AG04449 (cell line): ENCODE measurements at regions of chr19 and their contacts with region 1.

Region 1: GRCh38 chr19:17576759-17577473 is 21.5 kb downstream of the COLGALT1 start:
- DNase-seq: no peak
- H3K4me3 ChIP-seq: no peak overlapping the region
- CTCF ChIP-seq: no peak

Region 2: DNA sequence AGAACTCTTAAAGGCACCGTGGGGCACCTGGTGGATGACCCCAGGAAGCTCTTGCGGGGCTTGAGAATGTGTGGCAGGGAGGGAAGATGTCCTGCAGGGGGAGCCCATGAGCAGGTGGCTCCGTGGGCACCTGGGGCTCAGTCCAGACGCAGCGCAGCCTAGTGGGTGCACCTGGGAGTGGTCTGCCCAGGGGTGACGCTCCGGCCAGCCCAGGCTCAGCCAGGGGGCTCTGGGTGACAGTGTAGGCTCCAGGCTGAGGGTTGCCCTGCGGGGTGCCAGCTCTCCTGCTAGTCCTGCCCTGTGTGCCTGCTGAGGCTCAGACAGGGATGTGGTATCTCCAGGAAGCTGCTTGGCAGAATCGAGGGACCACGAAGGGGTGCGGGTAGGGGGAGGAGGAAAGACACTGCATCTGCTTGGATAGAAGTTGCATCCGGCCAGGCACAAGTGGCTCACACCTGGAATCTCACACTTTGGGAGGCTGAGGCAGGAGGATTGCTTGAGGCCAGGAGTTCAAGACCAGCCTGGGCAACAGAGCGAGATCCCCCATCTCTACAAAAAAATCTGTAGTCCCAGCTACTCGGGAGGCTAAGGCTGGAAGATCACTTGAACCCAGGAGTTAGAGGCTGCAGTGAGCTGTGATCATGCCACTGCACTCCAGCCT is 80.4 kb before region 1 on chr19:
- CTCF ChIA-PET with region 1: interaction called, 17 read pairs
- POLR2A ChIA-PET with region 1: no interaction called
- DNase-seq: no peak
- H3K4me3 ChIP-seq: no peak overlapping the region
- CTCF ChIP-seq: peak; percentile 91

Region 3: DNA sequence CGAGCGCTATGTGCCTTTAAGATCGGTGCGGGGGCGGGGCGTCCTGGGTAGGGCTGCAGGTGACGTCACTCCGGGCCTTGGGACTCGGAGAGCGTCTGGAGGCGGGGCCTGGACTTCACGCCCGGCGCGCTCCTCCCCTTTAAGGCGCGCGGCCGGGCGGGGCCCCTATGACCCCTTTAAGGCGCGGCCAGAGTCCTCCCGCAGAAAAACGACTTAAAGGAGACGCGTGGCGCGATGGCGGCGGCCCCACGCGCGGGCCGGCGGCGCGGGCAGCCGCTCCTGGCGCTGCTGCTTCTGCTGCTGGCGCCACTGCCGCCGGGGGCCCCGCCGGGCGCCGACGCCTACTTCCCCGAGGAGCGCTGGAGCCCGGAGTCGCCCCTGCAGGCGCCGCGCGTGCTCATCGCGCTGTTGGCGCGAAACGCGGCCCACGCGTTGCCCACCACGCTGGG is 21.4 kb before region 1 on chr19 and contains the start of gene COLGALT1:
- CTCF ChIA-PET with region 1: interaction called, 30 read pairs
- POLR2A ChIA-PET with region 1: no interaction called
- DNase-seq: peak; percentile 44
- H3K4me3 ChIP-seq: peak within 1 kb of the TSS; percentile 87
- CTCF ChIP-seq: no peak

Region 4: GRCh38 chr19:17562561-17562960 is 14.4 kb before region 1 on chr19:
- CTCF ChIA-PET with region 1: interaction called, 37 read pairs
- POLR2A ChIA-PET with region 1: no interaction called
- DNase-seq: no peak
- H3K4me3 ChIP-seq: no peak overlapping the region
- CTCF ChIP-seq: no peak

Region 5: GRCh38 chr19:17605761-17606745 is 29.1 kb after region 1 on chr19:
- CTCF ChIA-PET with region 1: interaction called, 12 read pairs
- POLR2A ChIA-PET with region 1: no interaction called
- DNase-seq: no peak
- H3K4me3 ChIP-seq: peak overlapping the region; percentile 52
- CTCF ChIP-seq: peak; percentile 55

Region 6: DNA sequence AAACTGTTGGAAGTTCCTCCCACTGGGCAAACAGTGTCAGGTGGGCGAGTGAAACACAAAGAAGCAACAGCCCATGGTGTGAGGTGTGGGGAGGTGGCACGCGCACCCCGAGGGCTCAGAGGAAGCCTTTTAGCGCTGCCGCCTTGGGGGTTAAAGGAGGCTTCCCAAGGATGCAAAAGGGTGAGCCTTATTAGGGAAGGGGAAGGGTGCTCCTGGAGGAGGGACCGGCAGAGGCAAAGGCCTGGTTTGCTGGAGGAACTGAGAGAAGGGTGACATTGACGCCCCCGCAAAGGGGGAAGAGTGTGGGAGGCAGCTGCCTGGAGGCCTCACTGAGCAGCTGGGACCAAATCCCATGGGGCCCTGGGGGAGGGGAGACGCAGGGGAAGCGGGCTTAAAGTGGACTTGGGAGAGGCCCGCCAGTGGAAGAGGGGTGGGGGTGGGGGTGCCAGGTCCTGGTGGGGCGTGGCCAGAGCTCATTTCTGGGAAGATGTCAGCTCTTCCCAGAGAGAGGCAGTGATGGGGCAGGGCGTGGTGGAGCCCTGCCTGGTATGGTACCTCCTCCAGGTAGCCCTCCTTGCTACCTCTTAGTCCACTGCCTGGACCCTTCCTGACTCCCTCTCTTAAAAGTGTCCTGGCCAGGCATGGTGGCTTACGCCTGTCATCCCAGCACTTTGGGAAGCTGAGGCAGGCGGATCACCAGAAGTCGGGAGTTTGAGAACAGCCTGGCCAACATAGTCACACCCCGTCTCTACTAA is 162.4 kb after region 1 on chr19:
- CTCF ChIA-PET with region 1: no interaction called
- POLR2A ChIA-PET with region 1: no interaction called
- DNase-seq: no peak
- H3K4me3 ChIP-seq: no peak overlapping the region
- CTCF ChIP-seq: no peak